Activated T-helper 2 cell treated with anti-CD3 and anti-CD28 coated beads, Interferon-gamma antibody, Interleukin-2, Interleukin-4, amounts not matched to agents 10 μg/mL and 5 μg/mL and 100 μg/mL, durations not matched to agents 14 hours and 24 hours and 36 hours (primary cell): ENCODE measurements at regions of chr9 and their contacts with region 1.

Region 1: DNA sequence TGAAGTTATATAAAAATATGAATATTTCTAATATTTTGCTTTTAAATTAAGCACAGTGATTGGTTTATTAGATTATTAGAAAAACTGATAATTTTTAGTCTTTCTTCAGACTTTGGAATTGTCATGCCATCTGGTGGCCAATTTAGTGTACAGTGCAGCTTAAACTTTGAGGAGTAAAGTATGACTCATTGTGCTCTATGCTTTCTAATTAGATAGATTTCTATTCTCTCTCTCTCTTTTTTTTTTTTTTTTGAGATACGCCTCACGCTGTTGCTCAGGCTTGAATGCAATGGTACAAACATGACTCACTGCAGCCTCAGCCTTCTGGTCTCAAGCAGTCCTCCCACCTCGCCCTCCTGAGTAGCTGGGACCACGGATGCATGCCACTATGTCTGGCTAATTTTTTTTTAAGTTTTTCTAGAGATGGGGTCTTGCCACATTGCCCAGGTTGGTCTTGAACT is 42.1 kb upstream of the GPR21 start:
- DNase-seq: peak; percentile 8
- H3K4me3 Mint-ChIP-seq: no peak overlapping the region
- H3K27ac Mint-ChIP-seq: no peak overlapping the region
- H3K4me1 Mint-ChIP-seq: peaks cover 8% of the 10 kb centered on the region
- H3K27me3 Mint-ChIP-seq: no peaks in the 10 kb centered on the region

Region 2: DNA sequence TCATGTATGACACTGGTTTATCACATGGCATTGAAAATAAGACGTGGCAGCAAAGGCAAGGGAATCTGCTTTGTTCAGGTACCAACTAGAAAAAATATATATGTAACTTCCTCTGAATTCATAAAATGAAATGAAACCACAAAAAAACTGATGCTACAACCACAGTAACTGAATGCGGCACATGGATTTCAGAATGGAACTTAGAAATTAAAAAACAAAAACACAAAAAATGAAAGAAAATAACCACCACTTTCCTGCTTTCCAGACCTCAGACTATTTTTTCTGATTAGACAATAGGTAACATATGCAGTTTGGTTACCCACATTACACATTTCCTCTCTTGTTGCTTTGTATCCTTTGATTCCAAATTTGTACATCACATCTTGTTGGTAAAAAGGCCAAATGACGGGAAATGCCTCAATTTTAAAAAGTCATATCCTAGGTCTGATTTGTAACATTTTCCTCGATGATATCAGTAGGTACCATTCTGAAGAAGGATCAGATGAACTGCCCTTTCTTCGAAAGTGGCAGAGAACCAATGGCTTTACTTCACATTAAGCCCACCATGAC is 144.9 kb before region 1 on chr9:
- intact Hi-C with region 1: loop called (anchors 5 kb)
- DNase-seq: no peak
- H3K4me3 Mint-ChIP-seq: peak overlapping the region; percentile 30
- H3K27ac Mint-ChIP-seq: peak overlapping the region; percentile 86
- H3K4me1 Mint-ChIP-seq: peaks cover 26% of the 10 kb centered on the region
- H3K27me3 Mint-ChIP-seq: no peaks in the 10 kb centered on the region

Region 3: GRCh38 chr9:122940603-122941559 is 50.5 kb before region 1 on chr9 and contains the start of gene RABGAP1:
- intact Hi-C with region 1: loop called (anchors 2 kb)
- DNase-seq: peak; percentile 96
- H3K4me3 Mint-ChIP-seq: peak within 1 kb of the TSS; percentile 91
- H3K27ac Mint-ChIP-seq: peak within 1 kb of the TSS; percentile 87
- H3K4me1 Mint-ChIP-seq: peaks cover 31% of the 10 kb centered on the region
- H3K27me3 Mint-ChIP-seq: no peaks in the 10 kb centered on the region
- total RNA-seq, gene RABGAP1: 26.5 and 29.2 TPM in 2 replicates

Region 4: DNA sequence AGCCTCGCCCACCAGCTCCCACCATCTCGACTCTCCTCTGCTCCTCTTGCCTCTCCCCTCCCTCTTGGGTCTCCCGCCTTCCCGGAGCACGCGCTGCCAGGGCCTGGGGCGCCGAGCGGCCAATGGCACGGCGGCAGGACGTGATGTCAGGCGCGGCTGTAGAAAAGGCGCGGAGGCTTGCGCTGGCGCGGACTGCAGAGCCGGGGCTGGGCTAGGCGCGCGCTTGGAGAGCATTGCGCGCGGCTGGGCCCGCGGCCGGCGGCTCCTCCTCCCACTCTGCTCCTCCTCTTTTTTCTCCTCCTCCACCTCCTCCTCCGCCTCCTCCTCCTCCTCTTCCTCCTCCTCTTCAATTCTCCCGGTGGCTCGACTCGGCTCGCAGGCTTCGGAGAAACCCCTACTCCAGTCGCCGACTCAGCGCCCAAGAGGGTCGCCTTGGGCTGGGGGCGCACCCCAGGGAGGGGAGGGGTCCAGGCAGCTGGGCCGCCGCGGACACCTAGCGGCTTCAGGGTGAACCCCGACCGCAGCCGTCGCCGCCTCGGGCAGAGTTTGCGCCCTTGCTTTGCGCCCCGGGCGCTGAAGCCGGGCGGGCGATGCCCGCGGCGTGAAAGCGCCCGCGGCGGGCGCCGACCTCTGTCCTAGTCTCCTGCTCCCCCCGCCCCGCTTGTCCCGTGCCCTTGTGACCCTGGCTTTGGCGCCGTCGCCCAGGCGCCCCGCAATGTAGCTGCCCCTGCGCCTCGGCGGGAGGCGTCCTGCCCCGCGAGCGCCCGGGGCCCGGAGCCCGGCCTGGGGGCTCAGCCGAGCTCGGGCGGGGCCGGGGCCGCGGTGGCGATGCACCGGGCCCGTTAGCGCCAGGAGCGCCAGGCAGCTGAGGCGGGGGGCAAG is 1020.3 kb after region 1 on chr9 and contains the start of gene LHX2:
- intact Hi-C with region 1: no loop called
- DNase-seq: no peak
- H3K4me3 Mint-ChIP-seq: no peak within 1 kb of the TSS
- H3K27ac Mint-ChIP-seq: no peak within 1 kb of the TSS
- H3K4me1 Mint-ChIP-seq: no peaks in the 10 kb centered on the region
- H3K27me3 Mint-ChIP-seq: peaks cover 66% of the 10 kb centered on the region
- total RNA-seq, gene LHX2: not detected in 2 replicates